ENCODE measurements at regions of chr21 and their contacts with region 1.

Region 1: DNA sequence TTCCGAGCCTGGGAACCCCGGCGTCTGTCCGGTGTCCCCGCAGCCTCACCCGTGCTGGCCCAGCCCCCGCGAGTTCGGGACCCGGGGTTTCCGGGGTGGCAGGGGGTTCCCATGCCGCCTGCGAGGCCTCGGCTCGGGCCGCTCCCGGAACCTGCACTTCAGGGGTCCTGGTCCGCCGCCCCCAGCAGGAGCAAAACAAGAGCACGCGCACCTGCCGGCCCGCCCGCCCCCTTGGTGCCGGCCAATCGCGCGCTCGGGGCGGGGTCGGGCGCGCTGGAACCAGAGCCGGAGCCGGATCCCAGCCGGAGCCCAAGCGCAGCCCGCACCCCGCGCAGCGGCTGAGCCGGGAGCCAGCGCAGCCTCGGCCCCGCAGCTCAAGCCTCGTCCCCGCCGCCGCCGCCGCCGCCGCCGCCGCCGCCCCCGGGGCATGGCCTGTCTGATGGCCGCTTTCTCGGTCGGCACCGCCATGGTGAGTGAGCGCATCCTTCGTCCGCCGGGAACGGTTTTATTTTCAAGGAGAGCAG is at the start of gene ABCG1:
- DNase-seq: peak in 6 of 7 donors; percentile 51 to 80 (median 67)
- H3K4me3 ChIP-seq: peak within 1 kb of the TSS; percentile 56 to 89 (median 84)
- H3K27ac ChIP-seq: peak within 1 kb of the TSS; percentile 39 to 94 (median 88)
- H3K4me1 ChIP-seq: peaks cover 17 to 28% of the 10 kb centered on the region in 2 donors
- H3K27me3 ChIP-seq: no peaks in the 10 kb centered on the region
- CTCF ChIP-seq: peak in 1 of 6 experiments; percentile 2
- POLR2A ChIP-seq: peak; percentile 86 to 92
- total RNA-seq, gene ABCG1: 23.2 to 136 (median 88.2) TPM

Region 2: DNA sequence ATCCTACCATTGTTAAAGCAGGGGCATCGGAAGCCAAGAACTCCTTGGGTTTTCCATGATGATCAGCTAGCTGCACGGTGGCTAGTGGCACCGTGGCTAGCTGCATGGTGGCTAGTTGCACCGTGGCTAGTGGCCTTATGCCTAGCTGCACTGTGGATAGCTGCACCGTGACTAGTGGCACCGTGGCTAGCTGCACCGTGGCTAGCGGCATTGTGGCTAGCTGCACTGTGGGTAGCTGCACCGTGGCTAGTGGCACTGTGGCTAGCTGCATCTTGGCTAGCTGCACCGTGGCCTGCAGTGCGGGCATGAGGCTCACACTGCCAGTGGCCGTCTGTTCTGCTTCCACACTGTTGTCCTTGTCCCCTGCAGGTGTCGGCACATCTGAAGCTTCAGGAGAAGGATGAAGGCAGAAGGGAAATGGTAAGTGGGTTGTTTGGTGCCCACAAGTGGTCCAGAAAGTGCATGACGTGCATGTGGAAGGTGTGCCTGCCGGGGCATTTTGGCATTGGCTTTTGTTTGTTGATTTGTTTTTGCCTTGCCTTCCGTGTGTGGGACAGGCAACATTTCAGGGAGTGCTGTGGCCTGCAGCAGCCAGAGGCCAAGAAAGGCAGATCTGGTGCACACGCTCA is 57.7 kb after region 1 on chr21:
- intact Hi-C with region 1: loop called in 1 of 2 experiments (anchors 10 kb)
- DNase-seq: no peak
- H3K4me3 ChIP-seq: no peak overlapping the region
- H3K27ac ChIP-seq: no peak overlapping the region
- H3K4me1 ChIP-seq: no peaks in the 10 kb centered on the region
- H3K27me3 ChIP-seq: no peaks in the 10 kb centered on the region
- CTCF ChIP-seq: no peak
- POLR2A ChIP-seq: no peak